Naive thymus-derived CD4-positive, alpha-beta T cell (primary cell): ENCODE measurements at regions of chr10 and their contacts with region 1.

Region 1: GRCh38 chr10:69004821-69005220 is 16.2 kb downstream of the KIFBP start:
- DNase-seq: peak in 7 of 9 donors; percentile 42 to 72 (median 60)
- ATAC-seq: peak; percentile 74
- H3K4me3 ChIP-seq: no peak overlapping the region
- H3K4me3 Mint-ChIP-seq: no peak overlapping the region
- H3K27ac ChIP-seq: no peak overlapping the region
- H3K27ac Mint-ChIP-seq: peak overlapping the region in 4 of 9 donors; percentile 23 to 43 (median 28)
- H3K4me1 ChIP-seq: peaks cover 0 to 3% of the 10 kb centered on the region in 2 donors
- H3K4me1 Mint-ChIP-seq: peaks cover 0 to 11% (median 5%) of the 10 kb centered on the region in 7 donors
- H3K27me3 ChIP-seq: no peaks in the 10 kb centered on the region
- H3K27me3 Mint-ChIP-seq: no peaks in the 10 kb centered on the region

Region 2: DNA sequence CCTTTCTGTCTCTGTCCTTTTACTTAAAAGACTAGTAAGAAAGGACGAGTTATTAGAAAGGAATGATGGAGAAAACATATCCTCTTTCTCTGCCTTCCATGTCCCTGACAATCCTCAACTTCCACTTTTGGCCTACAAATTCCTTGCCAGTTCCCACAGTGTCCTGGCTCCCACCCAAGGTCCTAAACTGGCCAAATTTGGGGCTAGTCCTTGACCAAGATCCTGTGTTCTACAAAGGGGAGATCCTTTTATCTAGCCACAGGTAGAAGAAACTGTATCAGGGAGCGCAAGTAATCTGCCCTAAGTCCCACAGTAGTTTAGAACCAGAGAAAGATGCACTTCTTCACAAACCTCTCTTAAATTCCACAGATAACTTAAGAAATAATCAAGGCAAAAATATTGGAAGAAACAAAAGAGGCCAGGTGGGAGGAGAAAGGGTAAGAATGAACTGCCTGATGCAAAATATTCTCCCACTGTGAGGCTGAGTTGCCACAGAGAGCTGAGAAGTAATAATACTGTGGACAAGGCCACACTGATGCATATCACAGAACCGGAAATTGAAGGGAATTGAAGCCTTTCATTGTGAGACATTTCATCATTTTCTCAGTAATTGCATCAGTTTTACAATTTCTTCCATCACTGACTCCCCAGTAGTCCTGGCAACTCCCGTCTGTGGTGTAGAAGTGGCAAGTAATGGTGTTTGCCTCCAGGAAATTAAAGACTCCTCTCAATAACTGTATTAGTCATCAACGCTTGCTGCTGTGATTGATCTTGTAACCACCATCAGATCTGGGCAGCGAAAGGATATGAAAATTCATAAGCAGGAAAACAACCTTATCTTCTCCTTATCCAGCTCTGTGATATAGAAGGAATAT is 1214.0 kb before region 1 on chr10:
- CTCF ChIA-PET with region 1: no interaction called
- POLR2A ChIA-PET with region 1: no interaction called
- intact Hi-C with region 1: no loop called
- DNase-seq: no peak
- ATAC-seq: peak; percentile 50
- H3K4me3 ChIP-seq: no peak overlapping the region
- H3K4me3 Mint-ChIP-seq: peak overlapping the region in 1 of 10 donors; percentile 33
- H3K27ac ChIP-seq: no peak overlapping the region
- H3K27ac Mint-ChIP-seq: peak overlapping the region in 1 of 9 donors; percentile 85
- H3K4me1 ChIP-seq: peaks cover 0 to 4% of the 10 kb centered on the region in 2 donors
- H3K4me1 Mint-ChIP-seq: peaks cover 0 to 36% (median 4%) of the 10 kb centered on the region in 7 donors
- H3K27me3 ChIP-seq: no peaks in the 10 kb centered on the region
- H3K27me3 Mint-ChIP-seq: no peaks in the 10 kb centered on the region

Region 3: GRCh38 chr10:68501691-68502090 is 503.1 kb before region 1 on chr10:
- CTCF ChIA-PET with region 1: no interaction called
- POLR2A ChIA-PET with region 1: no interaction called
- intact Hi-C with region 1: no loop called
- DNase-seq: no peak
- ATAC-seq: no peak
- H3K4me3 ChIP-seq: no peak overlapping the region
- H3K4me3 Mint-ChIP-seq: peak overlapping the region in 1 of 10 donors; percentile 26
- H3K27ac ChIP-seq: no peak overlapping the region
- H3K27ac Mint-ChIP-seq: peak overlapping the region in 1 of 9 donors; percentile 50
- H3K4me1 ChIP-seq: no peaks in the 10 kb centered on the region
- H3K4me1 Mint-ChIP-seq: peaks cover 0 to 12% (median 0%) of the 10 kb centered on the region in 7 donors
- H3K27me3 ChIP-seq: no peaks in the 10 kb centered on the region
- H3K27me3 Mint-ChIP-seq: no peaks in the 10 kb centered on the region

Region 4: DNA sequence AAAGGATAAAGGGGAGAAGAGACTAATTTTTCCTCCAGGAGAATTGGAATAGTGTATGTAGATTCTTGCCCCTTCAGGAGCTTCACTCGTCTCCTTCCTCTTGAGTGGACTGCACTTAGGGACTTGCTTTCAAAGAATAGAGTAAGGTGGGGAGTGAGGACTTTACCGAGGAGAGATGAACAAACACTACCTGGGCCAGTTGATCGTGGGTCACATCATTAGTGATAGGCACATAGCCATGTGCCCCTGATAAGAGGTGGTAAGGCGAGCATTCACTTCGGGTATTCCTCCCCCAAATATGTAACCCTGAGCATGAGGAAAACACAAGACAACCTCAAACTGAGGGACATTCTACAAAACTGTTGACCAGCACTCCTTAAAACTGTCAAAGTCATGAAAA is 30.8 kb before region 1 on chr10:
- CTCF ChIA-PET with region 1: no interaction called
- POLR2A ChIA-PET with region 1: no interaction called
- intact Hi-C with region 1: no loop called
- DNase-seq: no peak
- ATAC-seq: no peak
- H3K4me3 ChIP-seq: no peak overlapping the region
- H3K4me3 Mint-ChIP-seq: no peak overlapping the region
- H3K27ac ChIP-seq: no peak overlapping the region
- H3K27ac Mint-ChIP-seq: peak overlapping the region in 1 of 9 donors; percentile 61
- H3K4me1 ChIP-seq: peaks cover 0 to 5% of the 10 kb centered on the region in 2 donors
- H3K4me1 Mint-ChIP-seq: peaks cover 3 to 24% (median 12%) of the 10 kb centered on the region in 7 donors
- H3K27me3 ChIP-seq: no peaks in the 10 kb centered on the region
- H3K27me3 Mint-ChIP-seq: no peaks in the 10 kb centered on the region

Region 5: GRCh38 chr10:69087590-69088470 is 83.0 kb after region 1 on chr10 and contains the start of gene SRGN:
- CTCF ChIA-PET with region 1: interaction called, 186 read pairs
- POLR2A ChIA-PET with region 1: interaction called, 49 read pairs
- intact Hi-C with region 1: loop called (anchors 1 kb)
- DNase-seq: peak; percentile 54 to 94 (median 87)
- ATAC-seq: peak; percentile 76
- H3K4me3 ChIP-seq: peak within 1 kb of the TSS; percentile 84
- H3K4me3 Mint-ChIP-seq: peak within 1 kb of the TSS; percentile 85 to 95 (median 93)
- H3K27ac ChIP-seq: peak within 1 kb of the TSS; percentile 97
- H3K27ac Mint-ChIP-seq: peak within 1 kb of the TSS; percentile 93 to 99 (median 98)
- H3K4me1 ChIP-seq: peaks cover 28 to 46% of the 10 kb centered on the region in 2 donors
- H3K4me1 Mint-ChIP-seq: peaks cover 25 to 66% (median 58%) of the 10 kb centered on the region in 7 donors
- H3K27me3 ChIP-seq: no peaks in the 10 kb centered on the region
- H3K27me3 Mint-ChIP-seq: no peaks in the 10 kb centered on the region
- total RNA-seq, gene SRGN: 66.6 to 748 (median 227) TPM

Region 6: GRCh38 chr10:69092959-69093850 is 88.4 kb after region 1 on chr10:
- CTCF ChIA-PET with region 1: interaction called, 186 read pairs
- POLR2A ChIA-PET with region 1: interaction called, 49 read pairs
- intact Hi-C with region 1: loop called (anchors 1 kb)
- DNase-seq: peak; percentile 43 to 89 (median 85)
- ATAC-seq: peak; percentile 61
- H3K4me3 ChIP-seq: peak overlapping the region; percentile 19
- H3K4me3 Mint-ChIP-seq: peak overlapping the region in 7 of 10 donors; percentile 4 to 36 (median 15)
- H3K27ac ChIP-seq: peak overlapping the region; percentile 54
- H3K27ac Mint-ChIP-seq: peak overlapping the region; percentile 23 to 90 (median 63)
- H3K4me1 ChIP-seq: peaks cover 28 to 37% of the 10 kb centered on the region in 2 donors
- H3K4me1 Mint-ChIP-seq: peaks cover 23 to 64% (median 55%) of the 10 kb centered on the region in 7 donors
- H3K27me3 ChIP-seq: no peaks in the 10 kb centered on the region
- H3K27me3 Mint-ChIP-seq: no peaks in the 10 kb centered on the region

Region 7: GRCh38 chr10:70523057-70523456 is 1518.2 kb after region 1 on chr10:
- CTCF ChIA-PET with region 1: no interaction called
- POLR2A ChIA-PET with region 1: no interaction called
- intact Hi-C with region 1: no loop called
- DNase-seq: no peak
- ATAC-seq: no peak
- H3K4me3 ChIP-seq: no peak overlapping the region
- H3K4me3 Mint-ChIP-seq: no peak overlapping the region
- H3K27ac ChIP-seq: no peak overlapping the region
- H3K27ac Mint-ChIP-seq: no peak overlapping the region
- H3K4me1 ChIP-seq: no peaks in the 10 kb centered on the region
- H3K4me1 Mint-ChIP-seq: no peaks in the 10 kb centered on the region
- H3K27me3 ChIP-seq: no peaks in the 10 kb centered on the region
- H3K27me3 Mint-ChIP-seq: no peaks in the 10 kb centered on the region